ENCODE measurements at regions of chr17 and their contacts with region 1.

Region 1: DNA sequence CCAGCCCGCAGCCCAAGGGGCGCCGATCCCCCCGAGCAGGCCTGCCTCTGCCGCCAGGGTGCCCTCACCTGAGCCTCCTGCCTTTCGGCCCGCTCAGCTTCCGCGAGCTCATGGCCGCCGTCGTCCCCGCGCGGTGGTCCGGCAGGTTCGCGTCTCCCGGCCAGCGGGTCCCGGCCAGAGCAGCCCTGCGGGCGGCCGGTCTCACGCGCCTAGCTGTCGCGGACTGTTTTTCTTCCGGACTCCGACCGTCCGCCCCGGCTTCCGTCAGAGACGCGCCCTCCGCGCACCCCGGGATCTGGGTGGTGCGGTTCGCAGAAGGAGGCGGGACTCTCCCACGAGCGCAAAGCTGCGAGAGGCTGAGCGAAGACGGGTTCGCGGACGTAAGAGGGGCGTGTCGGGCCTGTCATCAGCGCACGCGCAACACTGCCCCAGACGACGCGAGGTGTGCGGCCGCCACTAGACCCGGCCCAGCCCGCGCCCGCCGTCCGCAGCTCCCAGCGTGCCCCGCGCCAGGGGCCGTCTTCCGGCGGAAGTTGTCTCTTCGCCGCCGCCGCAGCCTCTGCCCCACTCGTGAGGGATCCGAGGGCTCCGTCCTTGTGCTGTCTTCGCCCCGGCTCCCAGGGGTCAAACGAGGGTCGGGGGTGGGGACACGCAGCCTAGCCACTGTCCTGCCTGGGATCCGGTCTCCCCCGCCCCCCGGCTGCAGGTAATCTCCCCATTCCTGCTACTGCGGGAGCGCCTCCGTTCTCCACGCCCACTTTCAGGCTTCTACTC is at the start of gene INPP5K:
- DNase-seq: peak; percentile 98 to 99 (median 99)
- ATAC-seq: peak; percentile 97 to 98 (median 98)
- H3K4me3 ChIP-seq: peak within 1 kb of the TSS; percentile 60 to 100 (median 90)
- H3K27ac ChIP-seq: peak within 1 kb of the TSS; percentile 54 to 97 (median 92)
- H3K4me1 ChIP-seq: peaks cover 20 to 59% (median 44%) of the 10 kb centered on the region in 12 donors
- H3K27me3 ChIP-seq: no peaks in the 10 kb centered on the region
- CTCF ChIP-seq: no peak
- POLR2A ChIP-seq: peak in 1 of 2 donors; percentile 73
- total RNA-seq, gene INPP5K: 28.4 to 128 (median 33.4) TPM

Region 2: GRCh38 chr17:1275962-1276736 is 240.4 kb before region 1 on chr17:
- intact Hi-C with region 1: loop called in 7 of 10 experiments (anchors 5 to 10 kb)
- DNase-seq: peak; percentile 48 to 85 (median 62)
- ATAC-seq: peak; percentile 72 to 83 (median 77)
- H3K4me3 ChIP-seq: no peak overlapping the region
- H3K27ac ChIP-seq: no peak overlapping the region
- H3K4me1 ChIP-seq: peaks cover 0 to 8% (median 0%) of the 10 kb centered on the region in 12 donors
- H3K27me3 ChIP-seq: peaks cover 0 to 24% (median 9%) of the 10 kb centered on the region in 9 donors
- CTCF ChIP-seq: peak; percentile 72 to 88 (median 80)
- POLR2A ChIP-seq: no peak

Region 3: GRCh38 chr17:1399679-1400512 is 116.7 kb before region 1 on chr17 and contains the start of gene YWHAE:
- intact Hi-C with region 1: loop called in 1 of 10 experiments (anchors 10 kb)
- DNase-seq: peak; percentile 98 to 99 (median 98)
- ATAC-seq: peak; percentile 97 to 99 (median 98)
- H3K4me3 ChIP-seq: peak within 1 kb of the TSS; percentile 76 to 98 (median 88)
- H3K27ac ChIP-seq: peak within 1 kb of the TSS; percentile 93 to 99 (median 98)
- H3K4me1 ChIP-seq: peaks cover 6 to 49% (median 27%) of the 10 kb centered on the region in 12 donors
- H3K27me3 ChIP-seq: no peaks in the 10 kb centered on the region
- CTCF ChIP-seq: no peak
- POLR2A ChIP-seq: peak in 1 of 2 donors; percentile 87
- total RNA-seq, gene YWHAE: 562 to 1,150 (median 618) TPM

Region 4: GRCh38 chr17:1488030-1488863 is 28.3 kb before region 1 on chr17:
- intact Hi-C with region 1: loop called in 3 of 10 experiments (anchors 1 to 2 kb)
- DNase-seq: peak; percentile 90 to 94 (median 94)
- ATAC-seq: peak; percentile 45 to 71 (median 67)
- H3K4me3 ChIP-seq: peak overlapping the region; percentile 26 to 85 (median 70)
- H3K27ac ChIP-seq: peak overlapping the region; percentile 94 to 100 (median 99)
- H3K4me1 ChIP-seq: peaks cover 7 to 86% (median 68%) of the 10 kb centered on the region in 12 donors
- H3K27me3 ChIP-seq: no peaks in the 10 kb centered on the region
- CTCF ChIP-seq: peak in 5 of 12 donors; percentile 9 to 18 (median 15)
- POLR2A ChIP-seq: peak in 1 of 2 donors; percentile 69

Region 5: GRCh38 chr17:1546292-1546922 is 29.8 kb after region 1 on chr17:
- intact Hi-C with region 1: no loop called
- DNase-seq: no peak
- ATAC-seq: no peak
- H3K4me3 ChIP-seq: no peak overlapping the region
- H3K27ac ChIP-seq: no peak overlapping the region
- H3K4me1 ChIP-seq: peaks cover 0 to 5% (median 0%) of the 10 kb centered on the region in 12 donors
- H3K27me3 ChIP-seq: no peaks in the 10 kb centered on the region
- CTCF ChIP-seq: no peak
- POLR2A ChIP-seq: no peak

Region 6: GRCh38 chr17:1561400-1562175 is 45.0 kb after region 1 on chr17:
- intact Hi-C with region 1: no loop called
- DNase-seq: peak in 2 of 5 donors; percentile 33 to 66
- ATAC-seq: peak in 3 of 4 donors; percentile 23 to 41 (median 28)
- H3K4me3 ChIP-seq: peak overlapping the region; percentile 70 to 95 (median 84)
- H3K27ac ChIP-seq: peak overlapping the region; percentile 28 to 95 (median 82)
- H3K4me1 ChIP-seq: peaks cover 3 to 51% (median 24%) of the 10 kb centered on the region in 12 donors
- H3K27me3 ChIP-seq: no peaks in the 10 kb centered on the region
- CTCF ChIP-seq: peak in 7 of 12 donors; percentile 14 to 51 (median 32)
- POLR2A ChIP-seq: no peak